HAP-1 (cell line): ENCODE measurements at regions of chr19 and their contacts with region 1.

Region 1: GRCh38 chr19:52978576-52978975 is 15.9 kb upstream of the ZNF816 start:
- DNase-seq: no peak
- H3K4me3 ChIP-seq: no peak overlapping the region
- H3K4me1 ChIP-seq: no peaks in the 10 kb centered on the region
- H3K27me3 ChIP-seq: no peaks in the 10 kb centered on the region

Region 2: GRCh38 chr19:53308339-53308811 is 329.8 kb after region 1 on chr19:
- in situ Hi-C with region 1: no loop called
- DNase-seq: no peak
- H3K4me3 ChIP-seq: no peak overlapping the region
- H3K4me1 ChIP-seq: no peaks in the 10 kb centered on the region
- H3K27me3 ChIP-seq: no peaks in the 10 kb centered on the region

Region 3: DNA sequence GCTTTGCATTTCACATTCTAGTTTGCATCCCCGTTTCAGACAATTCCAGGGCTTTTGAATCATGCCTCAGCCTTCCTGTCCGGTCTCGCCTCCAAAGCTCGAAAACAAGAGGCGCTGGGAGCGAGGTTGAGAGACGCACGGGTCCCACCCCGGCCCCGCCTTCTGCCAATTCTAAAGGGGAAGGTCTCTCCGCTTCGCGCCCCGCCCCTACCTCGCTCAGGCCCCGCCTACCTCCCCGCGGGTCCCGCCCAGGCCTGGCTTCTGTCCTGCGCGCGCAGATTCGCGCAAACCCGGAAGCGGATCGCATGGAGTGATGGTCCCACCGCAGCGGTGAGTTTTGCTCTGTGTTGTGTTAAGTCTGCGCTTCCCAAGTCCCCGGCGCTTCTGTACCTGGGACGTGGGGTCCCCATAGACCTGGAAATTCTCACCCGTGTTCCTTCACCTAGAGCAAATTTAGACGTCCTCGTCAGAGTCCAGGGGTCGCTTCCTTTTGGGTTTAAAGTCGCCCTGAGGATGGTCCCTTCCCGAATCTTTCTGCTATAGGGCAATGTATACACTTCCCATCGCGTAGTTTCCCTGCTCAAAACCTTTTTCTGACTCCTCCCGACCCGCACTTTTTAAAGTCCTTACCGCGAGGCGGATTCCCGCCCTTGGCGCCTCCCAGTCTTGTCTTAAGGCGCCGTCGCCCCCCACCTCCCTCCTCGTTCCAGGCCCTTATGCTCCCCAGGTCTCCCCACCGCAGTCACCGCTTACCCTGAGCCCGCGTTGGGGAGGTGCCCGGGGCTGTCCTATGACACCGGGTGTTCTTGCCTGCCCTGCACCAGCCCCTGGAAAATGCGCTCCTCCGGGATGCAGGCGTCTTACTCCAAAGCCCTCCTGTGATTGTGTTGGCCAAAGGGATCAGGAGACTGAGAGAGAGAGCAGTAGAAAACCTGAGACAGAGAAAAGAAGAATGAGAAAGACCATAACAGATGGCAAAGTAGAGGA is 355.2 kb after region 1 on chr19 and contains the start of gene ZNF845:
- in situ Hi-C with region 1: loop called (anchors 5 kb)
- DNase-seq: peak; percentile 79 to 96
- H3K4me3 ChIP-seq: peak within 1 kb of the TSS; percentile 77
- H3K4me1 ChIP-seq: 0 out of 2 replicates have a peak, but pooled peaks cover 2% of the 10 kb centered on the region
- H3K27me3 ChIP-seq: no peaks in the 10 kb centered on the region